ENCODE measurements at regions of chr16 and their contacts with region 1.

Region 1: DNA sequence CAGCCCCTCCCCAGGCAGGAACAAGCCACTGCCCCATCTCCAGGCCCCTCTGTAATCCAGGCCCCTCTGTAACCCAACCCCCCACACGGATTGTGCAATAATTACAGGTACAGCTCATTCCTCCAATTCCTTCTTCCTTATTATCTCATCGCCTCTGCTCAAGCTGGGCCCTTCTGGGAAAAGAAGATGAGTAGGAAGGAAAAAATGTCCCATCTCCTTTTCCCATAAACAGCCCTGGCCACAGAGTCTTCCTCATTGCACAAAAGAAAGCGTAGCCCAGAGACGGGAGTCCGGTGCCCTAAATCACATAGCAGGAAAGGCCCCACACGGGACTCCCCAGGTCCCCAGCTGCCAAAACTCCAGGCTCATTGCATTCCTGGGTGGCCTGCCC is 3.6 kb upstream of the LITAFD start:
- DNase-seq: peak; percentile 64

Region 2: DNA sequence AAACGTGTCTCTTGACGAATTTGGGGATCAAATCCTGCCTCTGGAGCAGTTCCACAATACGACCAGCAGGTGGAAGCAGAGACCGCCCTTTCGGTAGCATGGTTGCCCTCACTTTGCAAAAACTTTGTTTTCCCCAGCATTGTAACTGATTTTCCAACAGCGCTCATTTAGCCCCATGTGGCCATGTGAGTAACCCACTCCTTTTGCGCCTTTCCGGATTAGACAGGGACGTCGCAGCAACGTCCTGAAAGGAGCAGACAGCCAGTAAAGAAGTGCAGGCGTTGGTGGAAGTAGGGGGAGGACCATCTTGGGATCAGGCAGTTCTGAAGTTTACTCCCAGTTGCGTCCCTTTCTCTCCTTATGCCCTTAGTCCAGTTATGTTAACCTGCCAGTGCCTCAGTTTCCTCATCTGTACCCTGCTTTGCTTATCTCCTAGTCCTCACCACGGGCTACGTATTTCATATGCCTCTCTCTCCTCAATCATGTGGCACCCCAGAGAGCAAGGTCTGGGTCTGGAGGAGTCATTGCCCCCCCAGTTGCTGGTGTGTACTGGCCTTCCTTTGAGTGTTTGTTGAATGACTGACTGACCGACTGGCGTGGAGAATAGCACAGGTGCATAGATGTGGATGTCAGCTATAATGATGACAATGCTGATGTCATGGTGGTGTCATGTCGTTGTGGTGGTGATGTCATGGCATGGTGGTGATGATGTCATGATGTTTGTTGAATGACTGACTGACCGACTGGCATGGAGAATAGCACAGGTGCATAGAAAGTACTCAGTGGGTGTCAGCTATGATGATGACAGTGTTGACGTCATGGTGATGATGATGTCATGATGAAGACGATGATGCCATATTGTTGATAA is 310.5 kb before region 1 on chr16:
- intact Hi-C with region 1: loop called (anchors 2 to 5 kb)
- DNase-seq: peak; percentile 88